CD8-positive, alpha-beta T cell (primary cell): ENCODE measurements at regions of chr3 and their contacts with region 1.

Region 1: GRCh38 chr3:156865732-156866131 is 39.6 kb downstream of the LEKR1 start:
- DNase-seq: no peak
- ATAC-seq: no peak
- H3K4me3 ChIP-seq: no peak overlapping the region
- H3K4me3 Mint-ChIP-seq: no peak overlapping the region
- H3K27ac ChIP-seq: no peak overlapping the region
- H3K27ac Mint-ChIP-seq: no peak overlapping the region
- H3K4me1 ChIP-seq: no peaks in the 10 kb centered on the region
- H3K4me1 Mint-ChIP-seq: no peaks in the 10 kb centered on the region
- H3K27me3 ChIP-seq: no peaks in the 10 kb centered on the region
- H3K27me3 Mint-ChIP-seq: no peaks in the 10 kb centered on the region
- CTCF ChIP-seq: no peak

Region 2: DNA sequence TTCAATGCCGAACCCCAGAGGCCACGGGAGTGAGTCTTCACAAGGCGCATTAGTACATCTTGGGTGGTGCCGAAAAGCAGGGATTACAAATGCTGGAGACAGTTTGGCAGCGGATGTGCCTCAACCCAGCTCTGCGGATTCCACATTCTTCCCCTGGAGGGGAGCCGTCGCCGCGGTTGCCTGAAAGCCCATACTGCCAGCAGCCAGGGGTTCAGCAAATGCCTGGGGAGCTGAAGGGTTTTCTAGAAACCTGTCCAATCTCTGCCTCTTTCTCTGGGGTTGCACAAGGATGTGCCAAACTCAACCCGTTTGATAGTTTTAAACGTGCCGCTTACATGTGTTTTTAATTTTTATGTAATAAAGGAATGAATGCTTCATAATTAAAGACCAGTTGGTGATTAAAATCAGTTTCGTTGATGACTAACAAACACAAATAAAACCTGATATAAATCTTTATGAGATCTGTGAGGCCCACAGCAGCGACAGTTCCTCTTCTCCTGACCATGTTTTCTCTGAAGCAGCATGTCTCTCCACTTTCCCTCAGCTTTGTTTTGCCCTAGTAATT is 114.2 kb before region 1 on chr3:
- CTCF ChIA-PET with region 1: no interaction called
- POLR2A ChIA-PET with region 1: no interaction called
- intact Hi-C with region 1: loop called in 1 of 2 experiments (anchors 10 kb)
- DNase-seq: no peak
- ATAC-seq: no peak
- H3K4me3 ChIP-seq: no peak overlapping the region
- H3K4me3 Mint-ChIP-seq: no peak overlapping the region
- H3K27ac ChIP-seq: no peak overlapping the region
- H3K27ac Mint-ChIP-seq: no peak overlapping the region
- H3K4me1 ChIP-seq: no peaks in the 10 kb centered on the region
- H3K4me1 Mint-ChIP-seq: no peaks in the 10 kb centered on the region
- H3K27me3 ChIP-seq: no peaks in the 10 kb centered on the region
- H3K27me3 Mint-ChIP-seq: peaks cover 9% of the 10 kb centered on the region
- CTCF ChIP-seq: no peak

Region 3: GRCh38 chr3:156826144-156826895 is 39.4 kb before region 1 on chr3 and contains the start of gene LEKR1:
- CTCF ChIA-PET with region 1: no interaction called
- POLR2A ChIA-PET with region 1: no interaction called
- intact Hi-C with region 1: no loop called
- DNase-seq: peak; percentile 28 to 92 (median 67)
- ATAC-seq: peak; percentile 54
- H3K4me3 ChIP-seq: peak within 1 kb of the TSS; percentile 71 to 81
- H3K4me3 Mint-ChIP-seq: peak within 1 kb of the TSS; percentile 89
- H3K27ac ChIP-seq: peak within 1 kb of the TSS; percentile 73 to 92
- H3K27ac Mint-ChIP-seq: peak within 1 kb of the TSS; percentile 95
- H3K4me1 ChIP-seq: peaks cover 9% of the 10 kb centered on the region
- H3K4me1 Mint-ChIP-seq: peaks cover 13% of the 10 kb centered on the region
- H3K27me3 ChIP-seq: no peaks in the 10 kb centered on the region
- H3K27me3 Mint-ChIP-seq: no peaks in the 10 kb centered on the region
- CTCF ChIP-seq: no peak
- total RNA-seq, gene LEKR1: 1.5 to 1.8 TPM

Region 4: DNA sequence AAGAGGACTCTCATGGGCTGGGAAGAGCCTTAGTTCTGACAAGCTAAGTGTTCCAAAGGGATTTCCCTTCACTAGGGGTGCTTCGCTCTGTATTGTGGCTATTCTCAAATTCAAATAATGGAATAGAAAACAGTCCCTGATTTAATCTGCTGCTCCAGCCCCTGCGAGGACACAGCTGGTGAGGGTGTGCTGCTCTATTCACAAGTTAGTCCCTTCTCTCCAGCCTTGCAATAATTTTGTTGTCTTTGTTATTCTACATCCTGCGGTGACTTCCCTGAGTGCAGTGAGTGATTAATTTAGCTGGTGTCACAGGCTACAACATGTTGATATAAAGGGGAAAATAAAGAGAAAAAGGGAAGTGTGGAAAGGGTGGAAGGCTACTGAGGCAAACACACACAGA is 817.9 kb after region 1 on chr3:
- CTCF ChIA-PET with region 1: no interaction called
- POLR2A ChIA-PET with region 1: no interaction called
- intact Hi-C with region 1: no loop called
- DNase-seq: no peak
- ATAC-seq: no peak
- H3K4me3 ChIP-seq: no peak overlapping the region
- H3K4me3 Mint-ChIP-seq: no peak overlapping the region
- H3K27ac ChIP-seq: no peak overlapping the region
- H3K27ac Mint-ChIP-seq: no peak overlapping the region
- H3K4me1 ChIP-seq: no peaks in the 10 kb centered on the region
- H3K4me1 Mint-ChIP-seq: no peaks in the 10 kb centered on the region
- H3K27me3 ChIP-seq: no peaks in the 10 kb centered on the region
- H3K27me3 Mint-ChIP-seq: no peaks in the 10 kb centered on the region
- CTCF ChIP-seq: no peak